Psoas muscle (tissue), 8 donors: ENCODE measurements at regions of chr15 and their contacts with region 1.

Region 1: GRCh38 chr15:78000091-78000926 is 77.2 kb downstream of the TBC1D2B start:
- DNase-seq: peak; percentile 74 to 90
- ATAC-seq: peak; percentile 60 to 71 (median 66)
- H3K4me3 ChIP-seq: no peak overlapping the region
- H3K27ac ChIP-seq: no peak overlapping the region
- H3K4me1 ChIP-seq: peaks cover 24% of the 10 kb centered on the region
- H3K27me3 ChIP-seq: no peaks in the 10 kb centered on the region
- CTCF ChIP-seq: peak; percentile 66

Region 2: GRCh38 chr15:77966540-77967290 is 33.6 kb before region 1 on chr15:
- intact Hi-C with region 1: loop called in 1 of 2 experiments (anchors 5 kb)
- DNase-seq: peak in 1 of 2 donors; percentile 73
- ATAC-seq: peak; percentile 75 to 94 (median 84)
- H3K4me3 ChIP-seq: no peak overlapping the region
- H3K27ac ChIP-seq: no peak overlapping the region
- H3K4me1 ChIP-seq: no peaks in the 10 kb centered on the region
- H3K27me3 ChIP-seq: no peaks in the 10 kb centered on the region
- CTCF ChIP-seq: peak; percentile 87

Region 3: DNA sequence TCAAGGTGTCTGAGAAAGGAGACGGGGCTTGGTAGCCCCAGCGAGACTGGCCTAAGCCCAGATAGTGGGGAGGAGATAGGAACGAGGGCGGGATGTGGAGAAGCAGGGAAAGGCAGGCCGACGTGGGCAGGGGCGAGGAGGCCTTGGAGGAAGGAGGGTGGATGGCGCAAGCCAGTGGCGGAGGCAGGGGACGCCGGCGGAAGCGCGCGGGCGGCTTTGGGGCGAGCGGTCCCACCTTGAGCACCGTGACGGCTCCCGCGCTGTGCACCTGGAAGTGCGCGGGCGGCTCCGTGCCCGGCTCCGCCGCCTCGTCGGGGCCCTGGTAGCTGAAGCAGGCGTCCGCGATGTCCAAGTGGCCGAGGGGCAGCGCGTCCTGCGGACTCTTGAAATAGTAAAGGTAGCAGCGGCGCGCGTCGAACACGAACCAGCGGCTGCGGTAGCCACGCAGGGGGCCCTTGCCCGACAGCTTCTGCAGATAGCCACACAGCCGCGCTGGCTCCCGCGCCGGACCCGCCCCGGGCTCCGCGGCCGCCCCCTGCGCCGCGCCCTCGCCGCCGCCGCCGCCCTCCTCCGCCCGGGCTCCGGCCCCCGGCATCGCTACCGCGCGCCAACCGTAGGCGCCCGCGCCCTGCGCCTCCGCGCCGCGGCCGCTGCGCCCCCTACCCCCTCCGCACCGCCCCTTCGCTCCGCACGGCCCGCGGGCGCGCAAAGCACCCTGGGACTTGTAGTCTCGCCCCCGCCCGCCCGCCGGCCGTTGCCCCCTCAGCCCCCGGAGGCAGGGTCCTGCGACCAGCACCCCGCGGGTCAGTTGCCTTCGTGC is 77.0 kb after region 1 on chr15 and contains the start of gene TBC1D2B:
- intact Hi-C with region 1: loop called (anchors 1 to 5 kb)
- DNase-seq: peak; percentile 75 to 83
- ATAC-seq: peak; percentile 70 to 90 (median 81)
- H3K4me3 ChIP-seq: peak within 1 kb of the TSS; percentile 93
- H3K27ac ChIP-seq: peak within 1 kb of the TSS; percentile 78
- H3K4me1 ChIP-seq: peaks cover 30% of the 10 kb centered on the region
- H3K27me3 ChIP-seq: no peaks in the 10 kb centered on the region
- CTCF ChIP-seq: no peak
- total RNA-seq, gene TBC1D2B: 6.8 to 11.8 (median 8.8) TPM

Region 4: DNA sequence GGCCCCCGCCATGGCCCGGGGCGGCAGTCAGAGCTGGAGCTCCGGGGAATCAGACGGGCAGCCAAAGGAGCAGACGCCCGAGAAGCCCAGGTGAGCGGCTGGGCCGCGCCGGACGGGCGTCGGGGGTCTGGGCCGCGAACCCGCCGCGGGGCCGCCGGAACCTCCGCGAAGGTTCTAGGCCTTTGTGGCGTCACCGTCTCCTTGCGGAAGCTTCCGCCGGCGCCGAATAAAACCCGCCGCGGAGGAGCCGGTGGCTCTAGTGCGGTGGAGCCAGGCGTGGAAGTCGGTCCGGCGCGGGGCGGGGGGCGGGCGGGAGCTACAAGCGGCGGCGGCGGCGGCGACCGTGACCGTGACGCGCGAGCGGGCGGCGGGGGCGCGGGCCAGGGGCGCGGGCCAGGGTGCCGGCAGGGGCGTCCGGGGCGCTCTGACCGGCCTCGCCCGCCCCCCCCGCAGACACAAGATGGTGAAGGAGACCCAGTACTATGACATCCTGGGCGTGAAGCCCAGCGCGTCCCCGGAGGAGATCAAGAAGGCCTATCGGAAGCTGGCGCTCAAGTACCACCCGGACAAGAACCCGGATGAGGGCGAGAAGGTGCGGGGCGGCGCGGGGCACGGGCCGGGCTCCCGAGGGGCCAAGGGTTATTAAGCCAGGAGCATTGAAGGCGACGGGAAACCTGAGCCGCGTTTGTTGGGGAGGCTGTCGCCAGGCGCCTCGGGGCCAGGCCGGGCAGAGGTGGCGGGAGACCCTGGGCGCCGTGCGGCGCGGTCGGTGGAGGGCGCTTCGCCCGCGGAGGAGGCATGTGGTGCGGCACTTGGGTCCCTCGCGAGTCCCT is 264.2 kb after region 1 on chr15 and contains the start of gene DNAJA4:
- intact Hi-C with region 1: loop called in 1 of 2 experiments (anchors 10 kb)
- DNase-seq: peak; percentile 76 to 85
- ATAC-seq: peak; percentile 40 to 71 (median 46)
- H3K4me3 ChIP-seq: peak within 1 kb of the TSS; percentile 88
- H3K27ac ChIP-seq: peak within 1 kb of the TSS; percentile 95
- H3K4me1 ChIP-seq: peaks cover 38% of the 10 kb centered on the region
- H3K27me3 ChIP-seq: no peaks in the 10 kb centered on the region
- CTCF ChIP-seq: no peak
- total RNA-seq, gene DNAJA4: 78.5 to 263 (median 184) TPM